ENCODE measurements at regions of chr6 and their contacts with region 1.

Region 1: GRCh38 chr6:89432875-89433251 is at the start of gene ANKRD6:
- DNase-seq: peak; percentile 72 to 78 (median 75)
- H3K4me3 ChIP-seq: peak within 1 kb of the TSS; percentile 63 to 83 (median 73)
- H3K27ac ChIP-seq: no peak within 1 kb of the TSS
- H3K4me1 ChIP-seq: peaks cover 0 to 23% (median 14%) of the 10 kb centered on the region in 4 experiments
- H3K27me3 ChIP-seq: no peaks in the 10 kb centered on the region

Region 2: GRCh38 chr6:89412071-89413005 is 20.5 kb before region 1 on chr6 and contains the start of gene RRAGD:
- CTCF ChIA-PET with region 1: interaction called, 53 read pairs
- POLR2A ChIA-PET with region 1: interaction called, 4 read pairs
- DNase-seq: peak; percentile 73 to 92 (median 85)
- H3K4me3 ChIP-seq: peak within 1 kb of the TSS; percentile 44 to 88 (median 82)
- H3K27ac ChIP-seq: peak within 1 kb of the TSS in 1 of 2 experiments; percentile 54
- H3K4me1 ChIP-seq: peaks cover 4 to 52% (median 26%) of the 10 kb centered on the region in 4 experiments
- H3K27me3 ChIP-seq: no peaks in the 10 kb centered on the region

Region 3: GRCh38 chr6:89547281-89547992 is 114.6 kb after region 1 on chr6:
- CTCF ChIA-PET with region 1: no interaction called
- POLR2A ChIA-PET with region 1: no interaction called
- DNase-seq: no peak
- H3K4me3 ChIP-seq: no peak overlapping the region
- H3K27ac ChIP-seq: no peak overlapping the region
- H3K4me1 ChIP-seq: no peaks in the 10 kb centered on the region
- H3K27me3 ChIP-seq: no peaks in the 10 kb centered on the region

Region 4: DNA sequence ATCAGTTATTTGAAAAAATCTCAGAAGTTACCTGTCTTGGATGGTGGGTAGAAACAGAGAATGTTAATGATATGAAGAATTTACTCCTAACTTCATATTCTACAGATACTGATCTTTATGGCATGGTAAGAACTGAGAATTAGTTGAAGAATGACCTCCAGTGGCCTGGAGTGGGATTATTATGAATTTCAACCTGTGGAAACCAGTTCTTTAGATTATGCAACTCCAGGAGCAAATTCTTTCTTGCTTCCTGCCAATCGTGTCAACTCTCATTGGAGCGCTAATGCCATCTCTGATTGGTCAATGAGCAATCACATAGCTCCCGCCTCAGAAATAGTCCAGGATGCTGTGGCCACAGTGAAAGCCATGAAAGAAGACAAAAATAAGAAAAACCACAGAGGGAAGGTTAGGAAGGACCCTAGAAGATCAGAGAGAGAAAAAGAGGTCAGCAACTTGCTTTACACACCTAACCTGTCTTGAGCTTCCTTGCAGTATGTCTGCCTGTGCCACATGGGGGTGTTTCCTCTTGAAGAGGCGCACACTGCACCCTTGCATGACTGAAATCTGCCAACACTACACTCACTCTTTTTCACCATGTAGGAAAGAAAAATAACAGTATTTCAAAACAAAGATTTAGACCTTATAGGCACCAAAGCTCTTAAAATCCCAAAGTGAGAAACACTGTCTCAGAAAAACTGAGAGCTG is 165.3 kb after region 1 on chr6:
- CTCF ChIA-PET with region 1: interaction called, 24 read pairs
- POLR2A ChIA-PET with region 1: no interaction called
- DNase-seq: peak; percentile 63 to 80 (median 80)
- H3K4me3 ChIP-seq: no peak overlapping the region
- H3K27ac ChIP-seq: no peak overlapping the region
- H3K4me1 ChIP-seq: peaks cover 0 to 7% (median 2%) of the 10 kb centered on the region in 4 experiments
- H3K27me3 ChIP-seq: no peaks in the 10 kb centered on the region

Region 5: DNA sequence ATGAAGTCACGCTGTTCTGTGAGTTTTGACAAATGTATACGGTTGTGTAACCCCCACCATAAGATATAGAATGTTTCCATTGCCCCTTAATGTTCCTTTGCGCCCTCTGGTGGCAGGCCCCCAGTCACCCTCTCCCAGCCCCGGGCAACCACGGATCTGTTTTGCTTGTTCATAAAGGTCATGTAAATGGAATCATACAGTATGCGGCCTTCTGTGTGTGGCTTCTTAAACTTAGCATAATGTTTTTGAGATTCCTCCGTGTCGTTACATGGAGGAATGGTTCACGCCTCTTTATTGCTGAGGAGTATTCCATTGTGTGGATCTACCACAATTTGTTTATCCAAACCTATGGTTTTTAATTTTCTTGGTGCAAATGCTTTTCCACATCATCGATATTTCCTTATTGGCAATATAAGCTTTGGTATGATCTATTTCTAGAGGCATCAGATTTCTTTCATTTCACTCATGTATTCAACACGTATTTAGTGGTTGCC is 177.3 kb after region 1 on chr6:
- CTCF ChIA-PET with region 1: interaction called, 58 read pairs
- POLR2A ChIA-PET with region 1: no interaction called
- DNase-seq: peak; percentile 65 to 82 (median 76)
- H3K4me3 ChIP-seq: no peak overlapping the region
- H3K27ac ChIP-seq: no peak overlapping the region
- H3K4me1 ChIP-seq: peaks cover 0 to 10% (median 0%) of the 10 kb centered on the region in 4 experiments
- H3K27me3 ChIP-seq: no peaks in the 10 kb centered on the region